Esophagus muscularis mucosa (tissue), 4 donors: ENCODE measurements at regions of chr17 and their contacts with region 1.

Region 1: DNA sequence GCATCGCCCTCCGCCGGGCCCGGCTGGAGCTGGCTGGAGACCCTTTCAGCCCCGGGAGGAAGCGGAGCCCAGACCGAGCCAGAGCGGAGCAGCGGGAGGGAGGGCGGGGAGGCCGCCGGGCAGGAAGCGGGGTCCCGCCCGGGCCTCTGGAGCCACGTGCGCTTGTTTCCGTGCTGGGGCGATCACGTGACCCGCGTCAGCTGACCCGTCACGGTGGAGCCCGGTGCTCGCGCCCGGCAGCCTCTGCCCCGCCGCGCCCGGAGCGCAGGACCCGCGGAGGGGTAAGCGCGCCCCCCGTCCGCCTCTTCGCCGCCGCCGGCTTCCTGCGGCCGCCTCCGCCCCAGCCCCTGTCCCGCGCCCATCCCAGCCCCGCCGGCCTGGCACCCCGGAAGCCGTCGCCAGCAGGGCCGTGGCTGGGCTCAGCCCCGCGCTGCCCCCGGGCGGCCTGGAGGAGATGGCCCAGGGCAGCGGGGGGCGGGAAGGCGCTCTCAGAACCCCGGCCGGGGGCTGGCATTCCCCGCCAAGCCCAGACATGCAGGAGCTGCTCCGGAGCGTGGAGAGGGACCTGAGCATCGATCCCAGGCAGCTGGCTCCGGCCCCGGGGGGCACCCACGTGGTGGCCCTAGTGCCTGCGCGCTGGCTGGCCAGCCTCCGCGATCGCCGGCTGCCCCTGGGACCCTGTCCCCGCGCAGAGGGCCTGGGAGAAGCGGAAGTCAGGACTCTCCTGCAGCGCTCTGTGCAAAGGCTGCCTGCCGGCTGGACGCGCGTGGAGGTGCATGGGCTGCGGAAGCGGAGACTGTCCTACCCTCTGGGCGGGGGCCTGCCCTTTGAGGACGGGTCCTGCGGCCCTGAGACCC is at the start of gene WDR81:
- DNase-seq: peak; percentile 98
- H3K4me3 ChIP-seq: peak within 1 kb of the TSS; percentile 74 to 94 (median 84)
- H3K27ac ChIP-seq: peak within 1 kb of the TSS; percentile 85 to 89 (median 86)
- H3K4me1 ChIP-seq: peaks cover 36 to 82% (median 70%) of the 10 kb centered on the region in 4 donors
- H3K27me3 ChIP-seq: no peaks in the 10 kb centered on the region
- CTCF ChIP-seq: peak in 2 of 3 experiments; percentile 29 to 32
- EP300 ChIP-seq: no peak
- POLR2A ChIP-seq: no peak
- total RNA-seq, gene WDR81: 25.7 to 40.8 (median 32.1) TPM

Region 2: DNA sequence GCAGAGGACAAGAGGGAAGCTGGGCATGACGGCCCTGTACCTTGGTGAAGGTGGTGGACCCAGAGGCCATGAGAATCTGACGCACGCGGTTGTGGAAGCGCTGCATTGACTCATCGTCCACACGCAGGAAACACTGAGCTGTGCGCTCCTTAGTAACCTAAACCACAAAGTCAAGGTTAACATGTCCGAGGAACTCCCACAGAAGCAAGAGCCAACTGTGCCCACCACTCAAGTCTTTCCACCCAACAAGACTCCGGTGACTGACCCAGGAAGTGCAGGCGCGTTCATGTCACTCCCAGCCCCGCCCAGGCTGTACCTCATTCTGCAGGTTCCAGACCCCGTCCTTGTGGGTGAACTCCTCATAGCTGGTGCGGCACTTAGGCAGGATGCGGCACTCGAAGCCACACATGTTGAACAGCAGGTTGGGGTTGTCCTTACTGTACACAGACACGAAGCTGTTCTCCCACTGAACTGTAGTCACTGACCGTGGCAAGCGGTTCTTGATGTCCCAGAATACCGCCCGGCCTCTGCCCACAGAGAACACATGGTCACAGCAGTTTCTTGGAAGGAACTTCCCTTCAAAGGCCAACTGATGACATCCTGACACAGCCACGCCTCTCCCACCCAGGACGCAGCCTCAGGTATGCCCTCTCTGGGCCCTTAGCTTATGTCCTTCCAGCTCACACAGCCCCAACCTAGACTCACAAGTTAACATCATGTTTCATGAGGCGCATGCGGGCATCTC is 51.5 kb before region 1 on chr17:
- intact Hi-C with region 1: no loop called
- DNase-seq: no peak
- H3K4me3 ChIP-seq: no peak overlapping the region
- H3K27ac ChIP-seq: peak overlapping the region in 1 of 4 donors; percentile 10
- H3K4me1 ChIP-seq: peaks cover 17 to 27% (median 25%) of the 10 kb centered on the region in 4 donors
- H3K27me3 ChIP-seq: no peaks in the 10 kb centered on the region
- CTCF ChIP-seq: no peak
- EP300 ChIP-seq: no peak
- POLR2A ChIP-seq: no peak

Region 3: DNA sequence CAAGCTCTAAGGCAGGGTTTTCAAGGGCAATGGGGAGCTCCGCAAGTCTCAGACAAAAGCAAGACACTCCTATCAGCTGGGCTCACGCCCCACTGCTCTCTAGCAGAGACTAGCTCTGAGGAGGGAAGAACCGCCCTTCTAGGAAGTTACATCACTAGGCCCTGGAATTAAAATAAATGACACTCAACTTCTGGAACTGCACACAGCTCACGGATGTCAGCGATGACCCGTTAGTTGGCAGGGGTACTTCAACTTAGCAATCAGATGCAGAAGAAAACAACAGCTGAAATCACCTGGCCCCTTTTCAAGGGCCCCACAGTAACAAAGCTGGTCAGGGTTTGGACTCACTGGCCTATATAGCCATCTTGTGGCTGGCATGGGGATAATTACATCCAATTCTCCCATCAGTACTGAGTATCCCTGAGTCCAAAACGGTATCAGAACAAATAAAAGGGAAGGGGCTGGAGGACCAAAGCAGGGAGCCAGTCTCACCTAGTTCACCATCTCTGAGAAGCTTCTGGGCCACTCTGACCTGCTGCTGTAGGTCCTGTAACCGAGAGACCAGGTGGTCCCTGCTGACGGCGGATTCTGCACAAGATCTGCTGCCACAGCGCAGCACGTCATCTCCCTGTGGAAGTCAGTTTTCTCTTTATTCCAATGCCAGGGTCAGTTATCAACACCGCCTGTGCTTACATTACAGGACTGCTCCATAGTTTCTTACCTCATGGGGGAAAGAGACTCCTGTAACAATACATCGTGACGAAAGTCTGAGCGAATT is 59.3 kb after region 1 on chr17:
- intact Hi-C with region 1: loop called (anchors 5 kb)
- DNase-seq: peak; percentile 97
- H3K4me3 ChIP-seq: peak overlapping the region in 2 of 4 donors; percentile 19 to 25
- H3K27ac ChIP-seq: peak overlapping the region; percentile 83 to 90 (median 87)
- H3K4me1 ChIP-seq: peaks cover 53 to 76% (median 69%) of the 10 kb centered on the region in 4 donors
- H3K27me3 ChIP-seq: no peaks in the 10 kb centered on the region
- CTCF ChIP-seq: peak; percentile 61 to 77 (median 73)
- EP300 ChIP-seq: peak; percentile 42
- POLR2A ChIP-seq: no peak

Region 4: GRCh38 chr17:1829592-1830257 is 105.0 kb after region 1 on chr17 and contains the starts of genes RPA1 and SMYD4:
- intact Hi-C with region 1: no loop called
- DNase-seq: peak; percentile 96
- H3K4me3 ChIP-seq: peak within 1 kb of the TSS; percentile 84 to 95 (median 94)
- H3K27ac ChIP-seq: peak within 1 kb of the TSS; percentile 91 to 93 (median 92)
- H3K4me1 ChIP-seq: peaks cover 8 to 52% (median 39%) of the 10 kb centered on the region in 4 donors
- H3K27me3 ChIP-seq: no peaks in the 10 kb centered on the region
- CTCF ChIP-seq: peak in 1 of 3 experiments; percentile 37
- EP300 ChIP-seq: no peak
- POLR2A ChIP-seq: peak; percentile 56
- total RNA-seq, gene RPA1: 22.9 to 30.8 (median 29.2) TPM
- total RNA-seq, gene SMYD4: 10.3 to 14.8 (median 11.9) TPM

Region 5: DNA sequence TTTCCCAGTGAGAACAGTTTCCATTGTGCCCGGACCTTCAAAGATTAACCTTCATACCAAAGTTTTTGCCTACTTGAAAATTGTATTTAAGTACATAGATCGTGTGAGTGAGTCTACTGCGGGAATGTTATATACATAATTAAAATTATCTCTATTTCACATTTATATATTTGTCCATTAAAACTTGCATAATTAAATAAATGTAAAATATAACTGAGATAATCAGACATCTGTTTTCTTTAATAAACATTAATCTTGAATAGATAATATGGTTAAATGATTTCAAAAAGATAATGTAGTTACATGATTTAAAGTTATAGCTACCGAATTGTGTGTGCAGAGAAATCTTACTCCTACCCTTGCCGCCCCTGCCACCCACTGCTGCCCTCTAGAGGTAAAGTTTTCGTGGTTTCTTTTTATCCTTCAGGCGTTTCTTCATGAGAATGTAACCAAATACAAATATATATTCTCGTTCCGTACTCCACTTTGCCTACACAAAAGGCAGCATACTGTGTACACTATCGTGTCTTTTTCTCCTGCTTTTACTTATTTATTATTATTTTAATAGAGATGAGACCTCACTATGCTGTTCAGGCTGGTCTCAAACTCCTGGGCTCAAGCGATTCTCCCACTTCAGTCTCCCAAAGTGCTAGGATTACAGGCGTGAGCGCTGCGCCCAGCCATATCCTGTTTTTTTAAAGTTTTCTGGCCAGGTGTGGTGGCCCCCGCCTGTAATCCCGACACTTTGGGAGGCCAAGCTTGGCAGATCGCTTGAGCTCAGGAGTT is 140.7 kb after region 1 on chr17:
- intact Hi-C with region 1: loop called (anchors 5 kb)
- DNase-seq: no peak
- H3K4me3 ChIP-seq: no peak overlapping the region
- H3K27ac ChIP-seq: no peak overlapping the region
- H3K4me1 ChIP-seq: peaks cover 0 to 7% (median 0%) of the 10 kb centered on the region in 4 donors
- H3K27me3 ChIP-seq: no peaks in the 10 kb centered on the region
- CTCF ChIP-seq: peak; percentile 53 to 70 (median 59)
- EP300 ChIP-seq: no peak
- POLR2A ChIP-seq: no peak